Activated CD4-positive, alpha-beta memory T cell treated with anti-CD3 and anti-CD28 coated beads for 36 hours (primary cell): ENCODE measurements at regions of chr11 and their contacts with region 1.

Region 1: DNA sequence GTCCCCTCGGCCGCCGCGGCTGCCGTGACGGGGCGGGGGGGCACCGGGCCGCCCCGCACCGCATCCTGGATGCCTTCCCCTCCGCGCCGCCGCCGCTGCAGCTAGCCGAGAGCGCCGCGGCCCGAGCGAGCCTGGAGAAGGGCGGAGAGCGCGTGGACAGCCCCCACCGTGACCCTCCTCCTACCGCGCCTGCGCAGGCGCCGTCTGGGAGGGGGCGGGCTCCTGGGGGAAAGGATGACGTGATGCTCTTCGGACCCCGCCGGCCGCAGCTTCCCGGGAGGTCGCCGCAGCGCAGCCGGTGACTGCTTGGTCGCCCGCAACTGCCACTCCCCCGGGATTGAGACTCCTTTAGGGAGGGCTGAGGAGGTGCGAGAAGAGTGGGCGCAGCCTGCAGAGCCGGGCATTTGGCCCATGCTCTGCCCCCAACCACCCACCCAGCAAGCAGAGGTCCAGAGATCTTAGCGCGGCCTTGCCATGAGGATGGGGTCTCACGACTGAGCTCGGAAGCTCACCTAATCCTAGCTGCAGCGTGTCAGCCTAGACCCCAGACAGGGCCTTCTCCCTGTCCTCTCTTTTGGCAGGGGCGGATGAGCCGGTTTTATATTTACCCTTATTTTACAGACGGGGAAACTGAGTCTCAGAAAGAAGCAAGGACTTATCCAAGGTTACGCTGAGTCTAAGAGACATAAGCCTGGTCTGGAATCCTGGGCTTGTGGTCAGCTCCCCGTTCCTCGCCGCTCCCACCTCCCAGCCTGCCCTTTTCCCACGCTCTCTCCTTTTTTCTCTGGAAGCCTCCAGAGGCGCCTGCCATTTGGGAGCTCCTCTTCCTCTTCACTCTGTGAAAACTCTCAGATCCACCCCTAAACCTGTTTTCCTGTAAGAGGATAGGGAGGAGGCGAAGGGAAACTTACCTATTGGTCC is at the start of gene DENND5A:
- DNase-seq: peak; percentile 69
- H3K4me3 Mint-ChIP-seq: peak within 1 kb of the TSS; percentile 89
- H3K27ac Mint-ChIP-seq: peak within 1 kb of the TSS; percentile 96
- H3K4me1 Mint-ChIP-seq: peaks cover 30% of the 10 kb centered on the region
- H3K27me3 Mint-ChIP-seq: peaks cover 8% of the 10 kb centered on the region
- total RNA-seq, gene DENND5A: 41.3 to 41.9 TPM

Region 2: GRCh38 chr11:9170450-9170849 is 95.0 kb before region 1 on chr11:
- CTCF ChIA-PET with region 1: interaction called, 3 read pairs
- POLR2A ChIA-PET with region 1: no interaction called
- intact Hi-C with region 1: loop called (anchors 2 kb)
- DNase-seq: no peak
- H3K4me3 Mint-ChIP-seq: no peak overlapping the region
- H3K27ac Mint-ChIP-seq: no peak overlapping the region
- H3K4me1 Mint-ChIP-seq: peaks cover 10% of the 10 kb centered on the region
- H3K27me3 Mint-ChIP-seq: no peaks in the 10 kb centered on the region

Region 3: DNA sequence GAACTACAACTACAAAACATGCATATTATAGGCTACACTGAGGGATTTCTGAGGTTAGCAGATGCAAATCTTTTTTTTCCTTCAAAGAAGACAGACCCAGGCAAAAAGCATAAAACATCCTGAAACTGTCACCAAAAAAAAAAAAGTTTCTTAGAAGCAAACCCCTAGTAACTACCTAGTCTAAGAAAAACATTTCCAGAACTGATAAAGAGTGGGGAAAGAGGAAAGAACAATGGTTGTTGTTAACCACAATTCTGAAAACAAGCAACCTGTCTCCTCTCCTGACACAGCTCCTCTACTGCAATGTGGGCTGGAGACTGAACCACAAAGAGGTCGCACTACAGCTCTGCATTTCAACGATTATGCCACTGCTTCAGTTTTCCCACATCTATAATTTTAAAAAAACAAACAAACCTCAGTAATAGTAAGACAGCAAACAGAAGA is 15.3 kb before region 1 on chr11:
- CTCF ChIA-PET with region 1: interaction called, 4 read pairs
- POLR2A ChIA-PET with region 1: interaction called, 10 read pairs
- intact Hi-C with region 1: loop called (anchors 1 kb)
- DNase-seq: peak; percentile 55
- H3K4me3 Mint-ChIP-seq: peak overlapping the region; percentile 15
- H3K27ac Mint-ChIP-seq: peak overlapping the region; percentile 67
- H3K4me1 Mint-ChIP-seq: peaks cover 51% of the 10 kb centered on the region
- H3K27me3 Mint-ChIP-seq: no peaks in the 10 kb centered on the region

Region 4: DNA sequence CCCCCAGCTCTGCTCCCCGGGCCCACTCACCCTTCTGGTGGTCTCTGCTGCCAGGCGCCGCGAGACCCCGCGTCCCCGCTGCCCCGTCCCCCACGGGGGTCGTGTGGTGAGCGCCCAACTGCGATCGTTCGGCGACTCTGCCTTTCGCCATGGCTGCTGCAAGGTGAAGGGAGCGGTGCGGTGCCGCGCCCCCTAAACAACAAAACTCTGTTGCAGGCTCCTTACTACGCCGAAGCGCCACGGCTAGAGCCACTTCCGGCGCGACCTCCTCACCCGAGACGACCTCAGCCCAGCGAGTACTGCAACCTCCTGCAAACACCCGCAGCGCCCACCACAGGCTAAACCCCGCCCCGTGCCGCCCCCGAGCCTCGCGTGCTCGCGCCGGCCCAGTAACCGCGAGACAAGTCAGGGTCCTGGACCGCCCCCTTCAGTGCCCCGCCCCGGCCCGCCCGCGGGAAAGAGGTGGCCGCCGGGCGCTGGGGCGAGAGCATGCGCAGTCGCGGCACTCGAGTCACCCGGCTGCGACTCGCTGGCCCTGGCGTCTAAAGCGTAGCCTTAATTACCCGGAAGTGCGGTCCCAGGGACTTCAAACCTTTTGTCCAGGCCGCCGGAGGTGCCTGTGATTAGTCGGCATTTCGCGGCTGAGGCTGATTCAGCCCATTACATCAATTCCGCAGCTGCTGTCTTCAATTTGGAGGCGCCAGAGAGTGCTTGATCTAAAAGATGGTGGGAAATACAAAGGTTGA is 49.0 kb after region 1 on chr11 and contains the start of gene TMEM41B:
- CTCF ChIA-PET with region 1: no interaction called
- POLR2A ChIA-PET with region 1: interaction called, 5 read pairs
- intact Hi-C with region 1: loop called (anchors 1 kb)
- DNase-seq: peak; percentile 99
- H3K4me3 Mint-ChIP-seq: peak within 1 kb of the TSS; percentile 97
- H3K27ac Mint-ChIP-seq: peak within 1 kb of the TSS; percentile 95
- H3K4me1 Mint-ChIP-seq: peaks cover 33% of the 10 kb centered on the region
- H3K27me3 Mint-ChIP-seq: peaks cover 10% of the 10 kb centered on the region
- total RNA-seq, gene TMEM41B: 33.6 to 36.1 TPM

Region 5: DNA sequence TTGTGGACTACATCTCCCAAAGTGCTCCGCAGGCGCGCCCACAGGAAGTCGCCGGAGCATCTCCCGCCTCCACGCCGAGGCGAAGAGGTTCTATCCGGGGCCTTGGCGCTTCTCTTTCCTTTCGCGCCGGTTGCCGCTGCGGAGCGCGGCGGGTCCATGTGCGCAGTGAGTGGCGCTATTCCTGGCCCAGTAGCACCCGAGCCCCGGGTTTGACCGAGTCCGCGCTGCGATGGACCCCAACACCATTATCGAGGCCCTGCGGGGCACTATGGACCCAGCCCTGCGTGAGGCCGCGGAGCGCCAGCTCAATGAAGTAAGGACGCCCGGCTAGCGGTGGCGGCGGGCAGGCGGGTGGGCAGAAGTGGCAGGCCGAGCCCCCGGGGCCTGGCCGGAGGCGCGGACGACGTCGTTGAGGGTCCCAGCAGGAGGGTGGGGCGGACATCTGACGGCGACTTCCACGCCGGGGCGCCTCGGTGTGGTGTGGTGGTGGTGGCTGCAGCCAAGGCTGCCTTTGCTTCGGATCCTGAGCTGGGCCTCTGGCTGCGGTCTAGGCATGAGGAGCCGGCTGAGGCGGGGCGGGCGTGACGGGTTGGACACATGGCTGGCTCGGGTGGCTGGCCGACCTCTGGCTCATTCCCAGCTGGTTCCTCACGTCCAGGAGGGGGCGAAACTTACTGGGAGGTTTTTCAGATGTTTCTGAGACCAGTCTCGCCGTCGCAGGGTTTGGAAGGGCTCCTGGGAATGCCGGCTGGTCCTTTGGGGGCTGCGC is 119.2 kb after region 1 on chr11 and contains the start of gene IPO7:
- CTCF ChIA-PET with region 1: interaction called, 3 read pairs
- POLR2A ChIA-PET with region 1: interaction called, 13 read pairs
- intact Hi-C with region 1: no loop called
- DNase-seq: peak; percentile 93
- H3K4me3 Mint-ChIP-seq: peak within 1 kb of the TSS; percentile 96
- H3K27ac Mint-ChIP-seq: peak within 1 kb of the TSS; percentile 87
- H3K4me1 Mint-ChIP-seq: peaks cover 29% of the 10 kb centered on the region
- H3K27me3 Mint-ChIP-seq: no peaks in the 10 kb centered on the region
- total RNA-seq, gene IPO7: 161 to 172 TPM